ENCODE measurements at regions of chr5 and their contacts with region 1.

Region 1: GRCh38 chr5:52799983-52800393 is 12.3 kb downstream of the ITGA1 start:
- DNase-seq: peak; percentile 95 to 99 (median 96)
- ATAC-seq: peak; percentile 92 to 97 (median 94)
- H3K4me3 ChIP-seq: peak overlapping the region; percentile 49 to 80 (median 67)
- H3K27ac ChIP-seq: peak overlapping the region; percentile 67 to 96 (median 91)
- H3K4me1 ChIP-seq: peaks cover 9 to 93% (median 63%) of the 10 kb centered on the region in 12 donors
- H3K27me3 ChIP-seq: no peaks in the 10 kb centered on the region
- CTCF ChIP-seq: no peak
- POLR2A ChIP-seq: peak in 1 of 2 donors; percentile 66

Region 2: GRCh38 chr5:52840277-52841050 is 40.5 kb after region 1 on chr5:
- intact Hi-C with region 1: loop called in 1 of 10 experiments (anchors 5 kb)
- DNase-seq: peak in 2 of 5 donors; percentile 27 to 38
- ATAC-seq: peak in 3 of 4 donors; percentile 41 to 82 (median 60)
- H3K4me3 ChIP-seq: peak overlapping the region in 2 of 12 donors; percentile 14 to 20
- H3K27ac ChIP-seq: peak overlapping the region in 10 of 12 donors; percentile 11 to 93 (median 54)
- H3K4me1 ChIP-seq: peaks cover 0 to 75% (median 23%) of the 10 kb centered on the region in 12 donors
- H3K27me3 ChIP-seq: no peaks in the 10 kb centered on the region
- CTCF ChIP-seq: no peak
- POLR2A ChIP-seq: no peak

Region 3: DNA sequence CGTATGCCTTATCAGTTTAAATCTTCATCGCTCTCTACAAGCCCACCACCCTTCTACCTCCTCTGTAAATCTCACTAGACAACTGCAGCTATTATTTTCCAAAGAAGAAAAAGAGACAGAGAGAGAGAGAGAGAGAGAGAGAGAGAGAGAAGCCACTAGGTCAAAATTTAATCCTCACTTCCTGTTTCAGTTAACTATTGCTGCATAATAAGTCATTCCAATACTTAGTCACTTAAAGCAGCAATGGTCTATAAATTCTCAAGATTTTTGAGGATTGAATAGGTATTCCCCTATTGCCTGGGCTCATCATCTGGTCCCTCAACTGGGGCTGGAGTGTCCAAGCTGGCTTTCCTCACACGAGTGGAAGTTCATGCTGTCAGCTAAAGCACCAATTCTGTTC is 56.6 kb after region 1 on chr5:
- intact Hi-C with region 1: loop called in 1 of 10 experiments (anchors 10 kb)
- DNase-seq: no peak
- ATAC-seq: no peak
- H3K4me3 ChIP-seq: no peak overlapping the region
- H3K27ac ChIP-seq: no peak overlapping the region
- H3K4me1 ChIP-seq: peaks cover 0 to 31% (median 2%) of the 10 kb centered on the region in 12 donors
- H3K27me3 ChIP-seq: no peaks in the 10 kb centered on the region
- CTCF ChIP-seq: no peak
- POLR2A ChIP-seq: no peak

Region 4: DNA sequence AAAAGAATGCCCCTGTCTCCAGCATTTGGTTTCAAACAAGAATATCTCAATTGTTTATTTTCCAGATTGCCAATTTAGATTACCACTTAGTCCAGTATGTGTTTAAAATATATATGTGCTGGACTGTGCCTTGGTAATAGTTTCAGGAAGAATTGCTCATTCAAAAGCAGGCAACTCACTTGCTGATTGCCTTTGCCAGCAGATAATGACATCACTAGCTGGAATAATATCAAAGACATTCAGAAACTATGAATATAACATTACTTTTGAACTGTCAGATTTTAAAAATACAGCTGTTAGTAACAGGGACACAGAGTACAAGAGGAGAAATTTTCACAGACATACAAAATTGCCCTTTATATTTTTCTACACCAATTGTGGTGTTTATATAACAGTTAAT is 93.1 kb after region 1 on chr5:
- intact Hi-C with region 1: loop called in 2 of 10 experiments (anchors 5 to 10 kb)
- DNase-seq: no peak
- ATAC-seq: peak; percentile 38 to 68 (median 58)
- H3K4me3 ChIP-seq: no peak overlapping the region
- H3K27ac ChIP-seq: peak overlapping the region in 5 of 12 donors; percentile 8 to 73 (median 50)
- H3K4me1 ChIP-seq: peaks cover 3 to 51% (median 28%) of the 10 kb centered on the region in 12 donors
- H3K27me3 ChIP-seq: no peaks in the 10 kb centered on the region
- CTCF ChIP-seq: no peak
- POLR2A ChIP-seq: no peak

Region 5: GRCh38 chr5:53109443-53110127 is 309.6 kb after region 1 on chr5 and contains the start of gene MOCS2:
- intact Hi-C with region 1: no loop called
- DNase-seq: peak; percentile 90 to 97 (median 94)
- ATAC-seq: peak; percentile 99 to 100 (median 100)
- H3K4me3 ChIP-seq: peak within 1 kb of the TSS; percentile 69 to 91 (median 78)
- H3K27ac ChIP-seq: peak within 1 kb of the TSS; percentile 11 to 87 (median 83)
- H3K4me1 ChIP-seq: peaks cover 0 to 29% (median 16%) of the 10 kb centered on the region in 12 donors
- H3K27me3 ChIP-seq: no peaks in the 10 kb centered on the region
- CTCF ChIP-seq: no peak
- POLR2A ChIP-seq: peak in 1 of 2 donors; percentile 82
- total RNA-seq, gene MOCS2: 59.5 to 101 (median 75.2) TPM